ENCODE measurements at regions of chr6 and their contacts with region 1.

Region 1: GRCh38 chr6:7107578-7108195 is at the start of gene RREB1:
- DNase-seq: peak; percentile 37 to 68 (median 60)
- ATAC-seq: peak; percentile 70
- H3K4me3 ChIP-seq: peak within 1 kb of the TSS; percentile 90
- H3K4me3 Mint-ChIP-seq: peak within 1 kb of the TSS; percentile 84 to 97 (median 95)
- H3K27ac ChIP-seq: peak within 1 kb of the TSS; percentile 82
- H3K27ac Mint-ChIP-seq: peak within 1 kb of the TSS; percentile 88 to 98 (median 95)
- H3K4me1 ChIP-seq: peaks cover 13 to 24% of the 10 kb centered on the region in 2 donors
- H3K4me1 Mint-ChIP-seq: peaks cover 26 to 41% (median 38%) of the 10 kb centered on the region in 7 donors
- H3K27me3 ChIP-seq: no peaks in the 10 kb centered on the region
- H3K27me3 Mint-ChIP-seq: peaks cover 0 to 7% (median 0%) of the 10 kb centered on the region in 5 donors
- total RNA-seq, gene RREB1: 28.3 to 56.7 (median 51.6) TPM

Region 2: GRCh38 chr6:6661684-6662083 is 446.0 kb before region 1 on chr6:
- CTCF ChIA-PET with region 1: no interaction called
- POLR2A ChIA-PET with region 1: no interaction called
- intact Hi-C with region 1: no loop called
- DNase-seq: no peak
- ATAC-seq: no peak
- H3K4me3 ChIP-seq: no peak overlapping the region
- H3K4me3 Mint-ChIP-seq: peak overlapping the region in 1 of 10 donors; percentile 9
- H3K27ac ChIP-seq: no peak overlapping the region
- H3K27ac Mint-ChIP-seq: peak overlapping the region in 7 of 9 donors; percentile 40 to 99 (median 95)
- H3K4me1 ChIP-seq: peaks cover 0 to 43% of the 10 kb centered on the region in 2 donors
- H3K4me1 Mint-ChIP-seq: peaks cover 25 to 72% (median 65%) of the 10 kb centered on the region in 7 donors
- H3K27me3 ChIP-seq: no peaks in the 10 kb centered on the region
- H3K27me3 Mint-ChIP-seq: no peaks in the 10 kb centered on the region

Region 3: GRCh38 chr6:6686748-6687601 is 420.7 kb before region 1 on chr6:
- CTCF ChIA-PET with region 1: no interaction called
- POLR2A ChIA-PET with region 1: no interaction called
- intact Hi-C with region 1: loop called in 1 of 2 experiments (anchors 10 kb)
- DNase-seq: peak in 2 of 9 donors; percentile 31 to 68
- ATAC-seq: peak; percentile 63
- H3K4me3 ChIP-seq: no peak overlapping the region
- H3K4me3 Mint-ChIP-seq: peak overlapping the region in 4 of 10 donors; percentile 9 to 76 (median 69)
- H3K27ac ChIP-seq: no peak overlapping the region
- H3K27ac Mint-ChIP-seq: peak overlapping the region in 3 of 9 donors; percentile 60 to 87 (median 70)
- H3K4me1 ChIP-seq: no peaks in the 10 kb centered on the region
- H3K4me1 Mint-ChIP-seq: peaks cover 12 to 67% (median 30%) of the 10 kb centered on the region in 7 donors
- H3K27me3 ChIP-seq: no peaks in the 10 kb centered on the region
- H3K27me3 Mint-ChIP-seq: peaks cover 0 to 2% (median 0%) of the 10 kb centered on the region in 5 donors

Region 4: GRCh38 chr6:6811151-6812002 is 296.3 kb before region 1 on chr6:
- CTCF ChIA-PET with region 1: no interaction called
- POLR2A ChIA-PET with region 1: no interaction called
- intact Hi-C with region 1: loop called in 1 of 2 experiments (anchors 5 kb)
- DNase-seq: peak in 7 of 9 donors; percentile 54 to 90 (median 73)
- ATAC-seq: peak; percentile 79
- H3K4me3 ChIP-seq: peak overlapping the region; percentile 57
- H3K4me3 Mint-ChIP-seq: peak overlapping the region; percentile 80 to 97 (median 95)
- H3K27ac ChIP-seq: peak overlapping the region; percentile 85
- H3K27ac Mint-ChIP-seq: peak overlapping the region; percentile 86 to 100 (median 99)
- H3K4me1 ChIP-seq: no peaks in the 10 kb centered on the region
- H3K4me1 Mint-ChIP-seq: peaks cover 10 to 28% (median 23%) of the 10 kb centered on the region in 7 donors
- H3K27me3 ChIP-seq: no peaks in the 10 kb centered on the region
- H3K27me3 Mint-ChIP-seq: peaks cover 0 to 35% (median 0%) of the 10 kb centered on the region in 5 donors

Region 5: DNA sequence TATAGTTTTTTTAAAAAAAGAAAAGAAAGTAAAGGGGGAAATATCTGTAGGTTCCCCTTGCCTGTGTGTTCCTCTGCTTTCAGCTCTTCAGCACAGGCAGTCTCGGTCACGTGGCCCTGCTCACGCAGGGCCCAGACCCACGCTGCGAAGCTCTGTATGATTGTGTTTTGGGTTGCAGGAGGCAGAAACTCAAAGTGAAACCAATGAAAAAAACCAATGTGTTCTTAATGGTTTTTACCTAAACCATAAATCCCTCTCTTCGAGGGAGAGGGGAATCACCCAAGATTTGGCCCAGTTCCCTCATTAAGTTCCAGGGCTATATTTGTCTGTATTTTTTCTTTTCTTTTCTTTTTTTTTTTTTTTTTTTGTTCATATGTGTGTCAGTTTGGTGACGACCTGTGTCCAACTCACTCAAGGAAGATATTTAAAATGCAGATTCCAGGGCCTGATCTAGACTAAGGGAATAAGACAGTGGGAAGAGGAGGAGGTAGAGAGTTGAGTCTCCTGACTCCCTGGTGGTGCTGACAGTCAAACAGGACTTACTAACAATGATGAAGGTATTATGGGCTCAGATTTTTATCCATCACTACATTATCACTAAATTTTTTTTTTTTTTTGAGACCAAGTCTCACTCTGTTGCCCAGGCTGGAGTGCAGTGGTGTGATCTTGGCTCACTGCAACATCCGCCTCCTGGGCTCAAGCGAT is 33.7 kb before region 1 on chr6:
- CTCF ChIA-PET with region 1: interaction called, 5 read pairs
- POLR2A ChIA-PET with region 1: interaction called, 6 read pairs
- intact Hi-C with region 1: loop called (anchors 1 kb)
- DNase-seq: peak in 8 of 9 donors; percentile 54 to 74 (median 64)
- ATAC-seq: peak; percentile 98
- H3K4me3 ChIP-seq: peak overlapping the region; percentile 2
- H3K4me3 Mint-ChIP-seq: peak overlapping the region; percentile 50 to 88 (median 76)
- H3K27ac ChIP-seq: peak overlapping the region; percentile 44
- H3K27ac Mint-ChIP-seq: peak overlapping the region; percentile 48 to 94 (median 85)
- H3K4me1 ChIP-seq: peaks cover 0 to 4% of the 10 kb centered on the region in 2 donors
- H3K4me1 Mint-ChIP-seq: peaks cover 7 to 17% (median 12%) of the 10 kb centered on the region in 7 donors
- H3K27me3 ChIP-seq: no peaks in the 10 kb centered on the region
- H3K27me3 Mint-ChIP-seq: peaks cover 0 to 72% (median 0%) of the 10 kb centered on the region in 5 donors

Region 6: GRCh38 chr6:7140631-7141378 is 33.1 kb after region 1 on chr6:
- CTCF ChIA-PET with region 1: interaction called, 3 read pairs
- POLR2A ChIA-PET with region 1: interaction called, 73 read pairs
- intact Hi-C with region 1: loop called (anchors 1 kb)
- DNase-seq: peak; percentile 69 to 86 (median 78)
- ATAC-seq: peak; percentile 89
- H3K4me3 ChIP-seq: peak overlapping the region; percentile 73
- H3K4me3 Mint-ChIP-seq: peak overlapping the region; percentile 80 to 92 (median 88)
- H3K27ac ChIP-seq: peak overlapping the region; percentile 91
- H3K27ac Mint-ChIP-seq: peak overlapping the region; percentile 85 to 99 (median 96)
- H3K4me1 ChIP-seq: peaks cover 22 to 51% of the 10 kb centered on the region in 2 donors
- H3K4me1 Mint-ChIP-seq: peaks cover 45 to 91% (median 85%) of the 10 kb centered on the region in 7 donors
- H3K27me3 ChIP-seq: no peaks in the 10 kb centered on the region
- H3K27me3 Mint-ChIP-seq: no peaks in the 10 kb centered on the region

Region 7: GRCh38 chr6:7238900-7239589 is 131.4 kb after region 1 on chr6:
- CTCF ChIA-PET with region 1: no interaction called
- POLR2A ChIA-PET with region 1: no interaction called
- intact Hi-C with region 1: loop called (anchors 1 to 2 kb)
- DNase-seq: peak; percentile 48 to 73 (median 67)
- ATAC-seq: peak; percentile 77
- H3K4me3 ChIP-seq: no peak overlapping the region
- H3K4me3 Mint-ChIP-seq: no peak overlapping the region
- H3K27ac ChIP-seq: peak overlapping the region; percentile 2
- H3K27ac Mint-ChIP-seq: peak overlapping the region in 6 of 9 donors; percentile 39 to 88 (median 75)
- H3K4me1 ChIP-seq: peaks cover 0 to 6% of the 10 kb centered on the region in 2 donors
- H3K4me1 Mint-ChIP-seq: peaks cover 17 to 41% (median 24%) of the 10 kb centered on the region in 7 donors
- H3K27me3 ChIP-seq: no peaks in the 10 kb centered on the region
- H3K27me3 Mint-ChIP-seq: no peaks in the 10 kb centered on the region